Naive thymus-derived CD4-positive, alpha-beta T cell (primary cell): ENCODE measurements at regions of chr21 and their contacts with region 1.

Region 1: GRCh38 chr21:42258153-42258884 is 39.4 kb downstream of the ABCG1 start:
- DNase-seq: peak; percentile 66 to 87 (median 77)
- ATAC-seq: peak; percentile 94
- H3K4me3 ChIP-seq: no peak overlapping the region
- H3K4me3 Mint-ChIP-seq: no peak overlapping the region
- H3K27ac ChIP-seq: no peak overlapping the region
- H3K27ac Mint-ChIP-seq: peak overlapping the region in 4 of 9 donors; percentile 12 to 59 (median 45)
- H3K4me1 ChIP-seq: no peaks in the 10 kb centered on the region
- H3K4me1 Mint-ChIP-seq: peaks cover 20 to 46% (median 35%) of the 10 kb centered on the region in 7 donors
- H3K27me3 ChIP-seq: no peaks in the 10 kb centered on the region
- H3K27me3 Mint-ChIP-seq: peaks cover 0 to 5% (median 0%) of the 10 kb centered on the region in 5 donors

Region 2: DNA sequence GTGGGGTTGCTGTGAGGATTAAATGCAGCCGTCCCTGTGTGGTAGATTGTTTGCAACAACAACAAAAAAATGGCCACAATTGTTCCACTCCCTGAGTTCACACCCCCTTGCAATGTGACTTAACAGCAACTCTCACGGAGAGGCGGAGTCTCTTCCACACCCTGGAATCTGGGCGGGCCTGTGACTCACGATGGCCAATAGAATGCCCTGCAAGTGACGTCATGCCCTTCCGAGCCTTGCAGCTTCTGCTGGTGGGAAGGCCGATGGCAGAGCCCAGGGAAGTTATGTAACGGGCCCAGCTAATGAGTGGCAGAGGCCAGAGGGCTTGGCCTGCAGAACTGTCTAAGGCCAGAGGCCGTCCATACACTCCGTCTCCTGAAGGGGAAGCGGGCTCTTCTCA is 579.4 kb before region 1 on chr21:
- CTCF ChIA-PET with region 1: no interaction called
- POLR2A ChIA-PET with region 1: no interaction called
- intact Hi-C with region 1: no loop called
- DNase-seq: no peak
- ATAC-seq: peak; percentile 93
- H3K4me3 ChIP-seq: no peak overlapping the region
- H3K4me3 Mint-ChIP-seq: no peak overlapping the region
- H3K27ac ChIP-seq: no peak overlapping the region
- H3K27ac Mint-ChIP-seq: no peak overlapping the region
- H3K4me1 ChIP-seq: no peaks in the 10 kb centered on the region
- H3K4me1 Mint-ChIP-seq: peaks cover 0 to 2% (median 0%) of the 10 kb centered on the region in 7 donors
- H3K27me3 ChIP-seq: no peaks in the 10 kb centered on the region
- H3K27me3 Mint-ChIP-seq: peaks cover 6 to 26% (median 12%) of the 10 kb centered on the region in 5 donors

Region 3: GRCh38 chr21:42187976-42188653 is 70.2 kb before region 1 on chr21:
- CTCF ChIA-PET with region 1: interaction called, 22 read pairs
- POLR2A ChIA-PET with region 1: no interaction called
- intact Hi-C with region 1: loop called (anchors 1 kb)
- DNase-seq: peak; percentile 39 to 90 (median 86)
- ATAC-seq: peak; percentile 96
- H3K4me3 ChIP-seq: peak overlapping the region; percentile 25
- H3K4me3 Mint-ChIP-seq: peak overlapping the region; percentile 39 to 90 (median 75)
- H3K27ac ChIP-seq: peak overlapping the region; percentile 85
- H3K27ac Mint-ChIP-seq: peak overlapping the region; percentile 91 to 98 (median 95)
- H3K4me1 ChIP-seq: peaks cover 73 to 90% of the 10 kb centered on the region in 2 donors
- H3K4me1 Mint-ChIP-seq: peaks cover 34 to 83% (median 65%) of the 10 kb centered on the region in 7 donors
- H3K27me3 ChIP-seq: no peaks in the 10 kb centered on the region
- H3K27me3 Mint-ChIP-seq: peaks cover 0 to 8% (median 0%) of the 10 kb centered on the region in 5 donors

Region 4: DNA sequence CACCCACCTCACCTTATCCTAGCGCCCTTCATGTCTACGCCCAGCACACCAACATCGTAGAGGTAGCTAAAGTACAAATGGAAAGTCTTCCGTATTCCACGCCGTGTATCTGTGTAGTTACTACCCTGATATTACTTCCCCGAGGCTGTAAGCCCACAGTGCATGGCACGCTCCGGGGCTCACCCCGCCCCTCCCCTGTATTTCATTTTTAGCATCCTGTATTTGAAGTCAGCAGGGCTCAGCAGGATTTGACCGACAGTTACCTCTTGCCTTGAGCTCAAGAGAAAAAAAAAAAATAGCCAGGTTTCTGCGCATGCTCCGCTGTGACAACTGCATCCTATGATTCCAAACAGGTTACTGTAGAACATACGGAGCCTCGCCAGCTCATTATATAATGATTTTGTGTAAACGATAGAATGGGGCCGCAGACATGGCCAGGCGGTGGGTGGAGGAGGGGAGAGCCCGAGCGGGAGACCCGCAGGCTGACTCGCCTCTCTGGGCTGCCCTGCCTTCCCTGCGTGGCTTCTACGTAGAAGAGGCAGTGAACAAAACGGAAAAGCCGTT is 38.1 kb before region 1 on chr21:
- CTCF ChIA-PET with region 1: interaction called, 6 read pairs
- POLR2A ChIA-PET with region 1: no interaction called
- intact Hi-C with region 1: loop called (anchors 1 kb)
- DNase-seq: peak; percentile 58 to 95 (median 93)
- ATAC-seq: peak; percentile 93
- H3K4me3 ChIP-seq: peak overlapping the region; percentile 69
- H3K4me3 Mint-ChIP-seq: peak overlapping the region; percentile 85 to 99 (median 93)
- H3K27ac ChIP-seq: peak overlapping the region; percentile 81
- H3K27ac Mint-ChIP-seq: peak overlapping the region; percentile 71 to 99 (median 91)
- H3K4me1 ChIP-seq: peaks cover 5 to 13% of the 10 kb centered on the region in 2 donors
- H3K4me1 Mint-ChIP-seq: peaks cover 21 to 44% (median 36%) of the 10 kb centered on the region in 7 donors
- H3K27me3 ChIP-seq: no peaks in the 10 kb centered on the region
- H3K27me3 Mint-ChIP-seq: peaks cover 0 to 3% (median 0%) of the 10 kb centered on the region in 5 donors

Region 5: DNA sequence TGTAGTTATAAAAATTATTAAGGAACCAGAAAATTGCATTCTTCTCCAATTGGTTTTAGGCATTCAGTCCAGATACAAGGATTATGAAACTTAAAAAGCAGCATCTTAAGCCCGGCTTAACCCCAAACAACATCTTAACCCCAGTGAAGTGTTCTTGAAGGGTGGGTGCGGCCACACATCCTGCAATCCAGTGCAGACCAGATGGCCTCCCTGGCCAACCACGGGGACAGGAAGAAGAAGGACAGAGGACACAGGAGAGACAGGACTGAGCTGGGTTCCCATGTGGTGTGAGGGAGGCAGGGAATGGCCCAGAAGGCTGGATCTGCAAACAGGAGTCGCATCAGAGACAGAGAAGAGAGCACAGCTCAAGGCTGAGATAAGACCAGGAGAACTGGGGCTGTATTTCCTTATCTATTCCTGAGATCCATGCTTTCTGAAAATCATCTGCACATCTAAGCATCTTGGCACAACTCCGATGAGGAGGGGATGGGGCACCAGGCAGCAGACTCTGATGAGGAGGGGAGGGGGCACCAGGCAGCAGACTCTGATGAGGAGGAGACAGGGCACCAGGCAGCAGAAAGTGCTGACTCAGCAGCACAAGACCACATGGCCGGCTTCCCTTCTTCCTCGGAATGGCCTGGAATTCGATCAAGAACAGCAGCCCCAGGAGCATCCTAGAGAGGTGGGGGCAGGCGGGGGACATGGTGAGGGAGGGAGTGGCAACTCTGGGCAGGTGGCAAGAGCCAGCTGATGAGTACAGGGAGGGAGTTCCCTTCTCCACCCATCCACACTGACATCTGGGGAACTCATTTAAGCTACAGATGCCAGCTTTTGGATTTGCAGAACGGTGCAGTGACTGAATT is 12.8 kb before region 1 on chr21:
- CTCF ChIA-PET with region 1: interaction called, 17 read pairs
- POLR2A ChIA-PET with region 1: no interaction called
- intact Hi-C with region 1: no loop called
- DNase-seq: no peak
- ATAC-seq: no peak
- H3K4me3 ChIP-seq: no peak overlapping the region
- H3K4me3 Mint-ChIP-seq: no peak overlapping the region
- H3K27ac ChIP-seq: no peak overlapping the region
- H3K27ac Mint-ChIP-seq: peak overlapping the region in 3 of 9 donors; percentile 25 to 47 (median 34)
- H3K4me1 ChIP-seq: no peaks in the 10 kb centered on the region
- H3K4me1 Mint-ChIP-seq: peaks cover 11 to 51% (median 32%) of the 10 kb centered on the region in 7 donors
- H3K27me3 ChIP-seq: no peaks in the 10 kb centered on the region
- H3K27me3 Mint-ChIP-seq: peaks cover 0 to 4% (median 0%) of the 10 kb centered on the region in 5 donors

Region 6: GRCh38 chr21:43825681-43826622 is 1567.6 kb after region 1 on chr21:
- CTCF ChIA-PET with region 1: no interaction called
- POLR2A ChIA-PET with region 1: no interaction called
- intact Hi-C with region 1: no loop called
- DNase-seq: no peak
- ATAC-seq: no peak
- H3K4me3 ChIP-seq: no peak overlapping the region
- H3K4me3 Mint-ChIP-seq: no peak overlapping the region
- H3K27ac ChIP-seq: no peak overlapping the region
- H3K27ac Mint-ChIP-seq: no peak overlapping the region
- H3K4me1 ChIP-seq: no peaks in the 10 kb centered on the region
- H3K4me1 Mint-ChIP-seq: peaks cover 0 to 3% (median 0%) of the 10 kb centered on the region in 7 donors
- H3K27me3 ChIP-seq: no peaks in the 10 kb centered on the region
- H3K27me3 Mint-ChIP-seq: peaks cover 0 to 26% (median 0%) of the 10 kb centered on the region in 5 donors